Activated CD4-positive, alpha-beta memory T cell treated with anti-CD3 and anti-CD28 coated beads for 36 hours (primary cell): ENCODE measurements at regions of chr6 and their contacts with region 1.

Region 1: DNA sequence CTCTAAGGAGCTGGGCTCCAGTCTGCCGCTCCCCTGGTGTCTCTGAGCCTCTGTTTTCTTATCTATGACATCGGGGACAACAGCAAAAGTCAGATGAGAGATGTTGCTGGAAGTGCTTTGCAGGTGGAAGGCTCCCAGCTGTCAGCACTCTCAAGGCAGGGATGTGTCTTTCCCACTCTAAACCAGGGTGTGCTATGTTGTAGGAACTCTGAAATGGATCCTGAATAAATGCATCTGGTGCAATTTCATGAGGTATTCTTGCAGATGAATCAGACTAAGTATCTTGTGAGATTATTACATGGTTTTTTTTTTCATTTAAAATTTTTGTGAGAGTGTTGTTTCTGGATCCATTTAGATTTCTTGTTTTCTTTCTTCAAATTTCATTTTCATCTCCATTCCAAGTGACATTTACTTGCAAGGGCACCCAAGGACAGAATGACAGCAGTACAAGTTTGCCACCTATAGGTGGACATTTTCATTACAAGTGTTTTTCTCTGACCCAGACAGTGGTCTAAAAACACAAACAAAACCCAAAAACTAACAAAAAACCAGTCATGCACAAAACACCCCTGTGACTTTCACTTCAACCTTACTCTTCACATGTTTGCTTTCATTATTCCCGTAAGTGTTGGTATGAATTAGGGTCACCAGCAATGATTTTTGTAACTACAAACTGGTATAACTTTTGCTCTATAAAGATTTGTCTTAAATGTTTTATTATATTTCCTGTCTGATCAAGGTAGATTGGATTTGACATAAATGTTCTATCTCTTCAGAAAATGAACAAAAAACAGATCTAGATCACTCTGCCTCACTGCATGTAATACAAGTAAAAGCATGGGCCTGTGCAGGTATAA is 14.7 kb upstream of the SIM1 start:
- DNase-seq: no peak
- H3K4me3 Mint-ChIP-seq: no peak overlapping the region
- H3K27ac Mint-ChIP-seq: no peak overlapping the region
- H3K4me1 Mint-ChIP-seq: peaks cover 2% of the 10 kb centered on the region
- H3K27me3 Mint-ChIP-seq: peaks cover 14% of the 10 kb centered on the region

Region 2: DNA sequence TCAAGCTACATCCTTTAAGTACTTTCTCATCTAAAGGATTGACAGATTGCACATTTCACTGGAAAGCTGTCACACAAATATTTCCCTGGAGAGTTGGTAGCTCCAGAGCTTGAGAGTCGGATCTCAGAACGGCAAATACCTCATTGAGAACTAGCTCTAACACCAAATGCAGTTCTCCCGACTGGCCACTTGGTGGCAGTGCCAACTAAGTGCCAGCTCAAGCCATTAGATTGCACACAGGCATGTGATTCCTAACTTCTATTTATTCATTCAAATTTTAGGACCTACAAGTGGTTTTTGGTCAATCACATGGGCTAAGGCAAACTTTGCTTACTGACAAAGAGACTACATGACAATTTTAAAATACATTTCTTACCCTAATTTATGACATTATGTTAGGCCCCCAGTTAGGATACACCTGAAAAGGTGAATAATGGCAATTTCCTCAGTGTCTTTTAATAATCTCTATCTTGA is 477.5 kb before region 1 on chr6:
- CTCF ChIA-PET with region 1: interaction called, 30 read pairs
- POLR2A ChIA-PET with region 1: no interaction called
- intact Hi-C with region 1: loop called (anchors 1 kb)
- DNase-seq: peak; percentile 48
- H3K4me3 Mint-ChIP-seq: no peak overlapping the region
- H3K27ac Mint-ChIP-seq: no peak overlapping the region
- H3K4me1 Mint-ChIP-seq: no peaks in the 10 kb centered on the region
- H3K27me3 Mint-ChIP-seq: peaks cover 23% of the 10 kb centered on the region

Region 3: DNA sequence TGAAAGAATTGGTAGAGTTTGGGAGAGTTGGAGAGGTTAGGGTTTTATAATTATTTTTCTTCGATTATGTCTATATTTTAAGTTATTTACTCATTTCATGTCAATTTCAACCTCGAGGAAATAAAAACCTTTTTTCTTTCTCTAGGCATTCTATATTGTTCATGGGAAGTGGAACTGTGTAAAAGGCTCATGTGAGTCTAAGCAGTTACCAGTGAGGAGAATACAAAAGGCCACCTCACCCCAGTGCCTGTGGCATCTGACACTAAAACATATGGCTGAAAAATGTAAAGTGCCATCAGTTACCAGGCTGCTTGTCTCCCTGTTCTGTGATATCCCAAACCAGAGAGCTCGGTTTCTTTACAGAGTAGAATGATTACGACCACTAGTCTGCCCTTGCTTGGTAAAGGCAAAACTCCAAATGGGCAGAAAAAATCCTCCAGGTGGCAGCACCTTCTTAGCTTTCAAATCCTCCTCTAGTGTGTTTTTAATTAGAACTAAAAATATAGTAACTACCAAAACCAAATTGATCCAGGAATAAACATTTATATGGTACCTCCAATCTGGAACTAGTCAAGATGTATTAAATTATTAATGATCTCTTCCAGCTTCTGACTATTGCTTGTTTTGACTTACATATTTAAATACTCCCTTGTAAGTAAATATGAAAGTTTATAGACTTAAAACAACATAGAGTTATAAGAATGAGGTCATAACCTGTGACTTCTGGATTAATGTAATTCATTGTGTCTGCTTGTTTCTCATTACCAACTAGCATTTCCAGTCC is 362.8 kb before region 1 on chr6:
- CTCF ChIA-PET with region 1: interaction called, 10 read pairs
- POLR2A ChIA-PET with region 1: no interaction called
- intact Hi-C with region 1: loop called (anchors 1 kb)
- DNase-seq: peak; percentile 37
- H3K4me3 Mint-ChIP-seq: no peak overlapping the region
- H3K27ac Mint-ChIP-seq: no peak overlapping the region
- H3K4me1 Mint-ChIP-seq: peaks cover 4% of the 10 kb centered on the region
- H3K27me3 Mint-ChIP-seq: peaks cover 11% of the 10 kb centered on the region